ENCODE measurements at regions of chr1 and their contacts with region 1.

Region 1: DNA sequence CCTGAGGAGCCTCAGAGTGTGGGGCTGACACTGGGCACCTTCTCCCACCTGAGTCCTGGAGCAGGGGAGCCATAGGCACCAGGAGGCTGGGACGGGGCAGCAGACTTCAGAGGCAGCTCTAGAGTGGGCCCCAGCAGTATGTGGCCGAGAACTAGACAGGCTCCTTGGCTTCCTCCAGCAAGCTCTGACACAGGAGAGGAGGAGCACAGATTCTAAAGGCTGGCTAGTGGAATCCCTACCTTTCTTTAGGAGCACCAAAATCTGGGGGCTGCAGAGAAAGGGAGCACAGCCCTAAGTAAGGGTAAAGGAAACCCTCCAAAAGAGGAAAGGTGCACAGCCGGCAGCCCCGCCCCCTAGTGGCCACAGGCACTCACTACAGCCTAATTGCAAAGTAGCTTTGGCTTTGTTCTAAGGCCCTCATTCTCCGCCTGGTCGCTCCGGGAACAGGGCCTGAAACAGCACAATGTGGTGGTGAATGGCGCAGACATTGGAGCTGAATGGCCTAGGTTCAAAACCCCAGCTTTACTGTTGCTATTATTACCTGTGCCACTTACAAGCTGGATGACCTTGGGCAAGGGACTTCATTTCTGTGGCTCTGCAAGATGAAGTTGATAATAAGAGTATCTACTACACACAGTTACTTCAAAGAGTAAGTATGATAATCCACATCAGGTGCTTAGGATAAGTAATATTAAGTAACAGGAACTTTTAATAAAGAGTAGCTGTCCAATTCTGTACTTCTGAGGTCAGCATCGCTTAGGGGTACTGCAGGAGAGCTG is 8.8 kb upstream of the GUCA2A start:
- DNase-seq: peak; percentile 60 to 64
- ATAC-seq: peak; percentile 43 to 74 (median 68)
- H3K4me3 ChIP-seq: no peak overlapping the region
- H3K27ac ChIP-seq: peak overlapping the region; percentile 47 to 91 (median 86)
- H3K4me1 ChIP-seq: peaks cover 15 to 56% (median 48%) of the 10 kb centered on the region in 9 donors
- H3K27me3 ChIP-seq: no peaks in the 10 kb centered on the region
- CTCF ChIP-seq: peak; percentile 94 to 99 (median 98)

Region 2: DNA sequence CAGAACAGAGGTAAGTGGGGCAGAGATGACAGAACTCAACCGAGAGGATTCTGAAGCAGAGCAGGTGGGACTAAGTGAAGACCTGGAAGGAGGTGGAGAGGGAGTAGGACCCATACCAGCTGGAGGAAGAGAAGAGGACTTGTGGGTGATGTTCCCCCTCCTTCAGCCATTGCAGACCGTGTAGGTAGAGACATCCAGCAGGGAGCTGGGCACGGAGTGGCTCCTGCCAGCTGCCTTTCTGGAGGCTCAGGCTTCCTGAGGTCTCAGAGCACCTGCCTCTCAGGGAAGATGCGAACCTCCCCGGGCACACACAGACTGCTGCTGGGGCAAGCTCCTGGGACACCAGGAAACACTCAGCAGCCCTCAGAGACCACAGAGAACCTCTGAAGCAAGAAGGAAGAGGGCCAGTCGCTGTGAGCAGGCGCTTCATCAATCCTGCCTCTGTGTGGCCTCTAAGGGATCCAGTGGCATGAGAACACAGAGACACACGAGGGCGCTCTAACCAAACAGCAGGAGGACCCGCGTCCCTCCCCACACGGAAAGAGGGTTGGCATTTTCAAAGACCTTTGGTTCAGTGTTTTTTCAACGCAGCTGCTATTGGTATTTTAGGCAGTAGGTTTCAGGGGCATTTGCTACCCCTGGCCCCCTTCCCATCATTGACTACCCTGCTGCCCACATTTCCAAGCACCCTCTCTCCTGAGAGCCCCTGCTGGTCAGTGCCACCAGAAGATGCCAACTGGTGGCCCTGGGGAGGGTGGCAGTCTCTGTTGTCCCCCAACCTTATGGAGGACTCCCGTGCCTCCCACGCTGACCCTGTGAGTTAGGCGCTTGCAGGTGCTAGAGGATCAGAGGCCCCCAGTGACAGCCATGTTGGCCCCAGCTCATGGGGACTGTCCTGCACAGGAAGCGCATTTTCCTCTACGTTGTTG is 599.3 kb before region 1 on chr1:
- intact Hi-C with region 1: loop called in 7 of 10 experiments (anchors 5 to 10 kb)
- DNase-seq: peak; percentile 69 to 84
- ATAC-seq: peak; percentile 87 to 94 (median 92)
- H3K4me3 ChIP-seq: no peak overlapping the region
- H3K27ac ChIP-seq: no peak overlapping the region
- H3K4me1 ChIP-seq: peaks cover 0 to 8% (median 0%) of the 10 kb centered on the region in 9 donors
- H3K27me3 ChIP-seq: no peaks in the 10 kb centered on the region
- CTCF ChIP-seq: peak; percentile 76 to 92 (median 91)

Region 3: DNA sequence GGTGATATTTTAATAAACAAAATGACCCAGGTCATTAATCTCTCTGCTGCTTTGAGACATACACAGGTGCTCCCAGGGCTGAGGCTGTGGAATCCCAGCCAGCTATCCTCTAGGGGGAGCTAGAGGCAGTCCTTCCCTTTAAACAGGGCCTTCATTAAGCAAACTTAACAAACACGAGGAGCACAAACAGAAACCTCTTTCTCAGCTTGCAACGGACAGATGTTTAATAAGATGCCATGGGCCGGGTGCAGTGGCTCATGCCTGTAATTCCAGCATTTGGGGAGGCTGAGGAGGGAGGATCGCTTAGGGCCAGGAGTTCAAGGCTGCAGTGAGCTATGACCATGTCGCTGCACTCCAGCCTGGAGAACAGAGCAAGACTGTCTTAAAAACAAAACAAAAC is 361.3 kb before region 1 on chr1:
- intact Hi-C with region 1: loop called in 3 of 10 experiments (anchors 5 to 10 kb)
- DNase-seq: peak in 1 of 2 donors; percentile 44
- ATAC-seq: peak in 2 of 8 donors; percentile 5 to 25
- H3K4me3 ChIP-seq: peak overlapping the region in 1 of 10 donors; percentile 1
- H3K27ac ChIP-seq: peak overlapping the region in 8 of 10 donors; percentile 28 to 86 (median 70)
- H3K4me1 ChIP-seq: peaks cover 0 to 54% (median 36%) of the 10 kb centered on the region in 9 donors
- H3K27me3 ChIP-seq: no peaks in the 10 kb centered on the region
- CTCF ChIP-seq: peak; percentile 30 to 75 (median 65)

Region 4: DNA sequence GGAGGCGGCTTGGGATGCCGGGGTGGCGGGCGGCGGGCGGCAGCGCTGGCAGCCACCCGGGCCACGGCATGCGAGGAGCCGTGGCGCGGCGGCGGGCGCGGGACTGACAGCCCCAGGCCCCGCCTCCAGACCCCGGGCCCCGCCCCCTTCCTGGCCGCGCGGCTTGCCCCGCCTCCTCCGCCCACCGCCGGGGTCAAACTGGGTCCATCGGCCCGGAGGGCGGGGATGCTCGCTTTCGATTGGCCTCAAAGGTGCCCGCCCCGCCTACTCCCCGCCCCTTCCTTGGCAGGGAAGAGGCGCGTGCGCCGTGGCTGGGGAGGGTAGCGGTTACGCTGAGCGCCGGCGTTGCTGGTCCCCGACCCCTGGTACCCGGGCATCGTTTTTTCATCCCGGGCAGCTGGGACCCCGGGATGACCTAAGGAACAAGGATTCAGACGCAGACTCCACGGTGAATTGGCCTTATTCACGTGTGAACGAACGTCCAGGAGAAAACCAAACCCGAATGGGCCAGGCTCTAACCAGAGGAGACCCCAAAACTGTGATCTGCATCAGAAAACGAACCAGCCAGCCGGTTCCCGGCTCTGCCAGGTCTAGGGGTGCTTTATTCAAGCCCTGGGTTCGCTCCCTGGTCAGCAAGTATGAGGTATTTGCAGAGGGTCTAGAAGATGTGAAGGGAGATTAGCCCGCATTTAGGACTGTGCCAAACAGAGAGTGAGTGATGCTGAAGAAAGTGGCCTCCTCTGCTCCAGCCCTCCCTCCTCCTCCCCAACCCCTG is 137.3 kb before region 1 on chr1:
- intact Hi-C with region 1: loop called in 1 of 10 experiments (anchors 10 kb)
- DNase-seq: peak; percentile 96 to 98
- ATAC-seq: peak; percentile 97 to 99 (median 98)
- H3K4me3 ChIP-seq: peak overlapping the region in 9 of 10 donors; percentile 81 to 99 (median 95)
- H3K27ac ChIP-seq: peak overlapping the region; percentile 29 to 91 (median 81)
- H3K4me1 ChIP-seq: peaks cover 0 to 18% (median 12%) of the 10 kb centered on the region in 9 donors
- H3K27me3 ChIP-seq: no peaks in the 10 kb centered on the region
- CTCF ChIP-seq: no peak

Region 5: GRCh38 chr1:42324398-42325013 is 151.2 kb after region 1 on chr1:
- intact Hi-C with region 1: loop called in 1 of 10 experiments (anchors 5 kb)
- DNase-seq: no peak
- ATAC-seq: peak in 2 of 8 donors; percentile 59 to 60
- H3K4me3 ChIP-seq: no peak overlapping the region
- H3K27ac ChIP-seq: no peak overlapping the region
- H3K4me1 ChIP-seq: peaks cover 0 to 97% (median 63%) of the 10 kb centered on the region in 9 donors
- H3K27me3 ChIP-seq: no peaks in the 10 kb centered on the region
- CTCF ChIP-seq: no peak

Region 6: GRCh38 chr1:42462828-42463763 is 289.8 kb after region 1 on chr1 and contains the start of gene CCDC30:
- intact Hi-C with region 1: loop called in 1 of 10 experiments (anchors 10 kb)
- DNase-seq: peak; percentile 90 to 96
- ATAC-seq: peak; percentile 99 to 100 (median 100)
- H3K4me3 ChIP-seq: peak within 1 kb of the TSS; percentile 47 to 89 (median 76)
- H3K27ac ChIP-seq: peak within 1 kb of the TSS in 6 of 10 donors; percentile 28 to 61 (median 51)
- H3K4me1 ChIP-seq: peaks cover 0 to 25% (median 19%) of the 10 kb centered on the region in 9 donors
- H3K27me3 ChIP-seq: no peaks in the 10 kb centered on the region
- CTCF ChIP-seq: no peak
- total RNA-seq, gene CCDC30: 0.70 to 3.2 (median 1.4) TPM

Region 7: GRCh38 chr1:42484382-42484781 is 311.0 kb after region 1 on chr1:
- intact Hi-C with region 1: no loop called
- DNase-seq: peak in 1 of 2 donors; percentile 16
- ATAC-seq: peak in 6 of 8 donors; percentile 58 to 97 (median 84)
- H3K4me3 ChIP-seq: no peak overlapping the region
- H3K27ac ChIP-seq: peak overlapping the region in 3 of 10 donors; percentile 17 to 66 (median 45)
- H3K4me1 ChIP-seq: peaks cover 0 to 7% (median 0%) of the 10 kb centered on the region in 9 donors
- H3K27me3 ChIP-seq: no peaks in the 10 kb centered on the region
- CTCF ChIP-seq: no peak